ENCODE measurements at regions of chr1 and their contacts with region 1.

Region 1: DNA sequence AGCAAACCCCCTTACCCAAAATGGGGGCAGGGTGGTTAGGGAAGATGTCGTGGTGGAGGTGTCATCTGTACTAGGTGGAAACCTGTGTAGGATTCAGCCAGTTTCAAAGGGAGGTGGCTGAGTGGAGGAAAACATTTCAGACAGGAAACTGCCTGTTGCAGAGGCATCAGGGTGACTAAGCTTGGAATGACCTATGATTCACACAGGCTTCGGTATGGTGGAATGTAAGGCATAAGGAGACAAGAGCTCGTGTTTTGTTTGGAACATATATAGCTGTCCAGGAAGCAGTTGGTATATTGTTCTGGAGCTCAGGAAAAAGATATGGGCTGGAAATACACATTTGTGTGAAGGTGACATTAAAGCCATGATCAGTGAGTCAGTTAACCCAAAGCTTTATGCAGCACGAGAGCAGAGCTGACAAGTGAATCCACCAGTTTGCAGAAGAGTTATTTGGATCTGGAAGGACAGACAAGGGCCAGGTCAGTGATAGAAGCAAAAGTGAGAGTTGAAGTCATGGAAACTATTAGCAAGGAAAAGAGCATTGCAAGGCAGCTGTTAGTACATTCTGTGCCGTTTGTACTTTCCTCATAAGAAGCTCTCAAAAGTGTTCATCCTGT is 12.2 kb downstream of the UTP25 start:
- DNase-seq: peak; percentile 29
- ATAC-seq: peak; percentile 77
- H3K4me3 Mint-ChIP-seq: no peak overlapping the region
- H3K27ac Mint-ChIP-seq: peak overlapping the region; percentile 72
- H3K4me1 Mint-ChIP-seq: peaks cover 46% of the 10 kb centered on the region
- H3K27me3 Mint-ChIP-seq: no peaks in the 10 kb centered on the region

Region 2: GRCh38 chr1:209747580-209748262 is 92.3 kb before region 1 on chr1:
- CTCF ChIA-PET with region 1: no interaction called
- POLR2A ChIA-PET with region 1: no interaction called
- intact Hi-C with region 1: no loop called
- DNase-seq: peak; percentile 93
- ATAC-seq: peak; percentile 74
- H3K4me3 Mint-ChIP-seq: peak overlapping the region; percentile 65
- H3K27ac Mint-ChIP-seq: peak overlapping the region; percentile 92
- H3K4me1 Mint-ChIP-seq: peaks cover 70% of the 10 kb centered on the region
- H3K27me3 Mint-ChIP-seq: no peaks in the 10 kb centered on the region

Region 3: DNA sequence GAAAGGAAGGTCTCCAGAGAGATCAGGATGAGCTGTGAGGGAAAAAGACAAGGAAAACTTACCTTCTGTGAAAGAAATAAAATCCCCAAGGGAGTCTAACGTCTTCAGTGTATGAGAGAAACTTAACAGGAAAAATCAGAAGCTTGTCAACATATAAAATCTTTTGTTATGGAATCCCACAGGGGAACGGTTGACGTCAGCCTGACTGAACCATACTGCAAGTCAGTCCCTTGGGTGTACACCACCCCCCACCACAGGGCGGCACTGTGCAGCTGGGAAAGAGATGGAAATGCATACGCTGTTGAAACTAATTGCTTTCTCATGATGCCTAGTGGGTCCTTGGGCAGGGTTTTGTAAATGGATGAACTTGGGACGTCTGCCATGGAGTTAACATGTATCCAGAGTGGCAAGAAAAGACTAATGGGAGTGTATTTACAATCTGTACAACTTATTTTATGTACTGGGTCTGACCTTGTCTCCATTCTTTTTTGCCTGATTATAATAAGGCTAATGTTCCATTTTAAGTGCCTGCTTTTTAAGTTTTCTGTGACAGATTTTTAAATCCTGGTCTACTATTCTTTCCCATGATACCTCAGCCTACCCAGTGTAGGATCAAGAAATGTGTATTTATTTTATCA is 10.5 kb after region 1 on chr1:
- CTCF ChIA-PET with region 1: interaction called, 11 read pairs
- POLR2A ChIA-PET with region 1: no interaction called
- intact Hi-C with region 1: no loop called
- DNase-seq: peak; percentile 69
- ATAC-seq: peak; percentile 61
- H3K4me3 Mint-ChIP-seq: no peak overlapping the region
- H3K27ac Mint-ChIP-seq: no peak overlapping the region
- H3K4me1 Mint-ChIP-seq: peaks cover 2% of the 10 kb centered on the region
- H3K27me3 Mint-ChIP-seq: no peaks in the 10 kb centered on the region

Measured in activated CD4-positive, alpha-beta T cell treated with anti-CD3 and anti-CD28 coated beads for 36 hours (primary cell).